Naive thymus-derived CD4-positive, alpha-beta T cell (primary cell): ENCODE measurements at regions of chr7 and their contacts with region 1.

Region 1: GRCh38 chr7:130242198-130243014 is 24.3 kb upstream of the CPA2 start:
- DNase-seq: peak; percentile 35 to 67 (median 47)
- ATAC-seq: peak; percentile 77
- H3K4me3 ChIP-seq: no peak overlapping the region
- H3K4me3 Mint-ChIP-seq: peak overlapping the region in 1 of 10 donors; percentile 66
- H3K27ac ChIP-seq: no peak overlapping the region
- H3K27ac Mint-ChIP-seq: peak overlapping the region in 1 of 9 donors; percentile 68
- H3K4me1 ChIP-seq: no peaks in the 10 kb centered on the region
- H3K4me1 Mint-ChIP-seq: peaks cover 0 to 12% (median 8%) of the 10 kb centered on the region in 7 donors
- H3K27me3 ChIP-seq: no peaks in the 10 kb centered on the region
- H3K27me3 Mint-ChIP-seq: peaks cover 0 to 11% (median 0%) of the 10 kb centered on the region in 5 donors

Region 2: GRCh38 chr7:129975309-129975708 is 267.1 kb before region 1 on chr7:
- CTCF ChIA-PET with region 1: no interaction called
- POLR2A ChIA-PET with region 1: no interaction called
- intact Hi-C with region 1: no loop called
- DNase-seq: no peak
- ATAC-seq: no peak
- H3K4me3 ChIP-seq: no peak overlapping the region
- H3K4me3 Mint-ChIP-seq: no peak overlapping the region
- H3K27ac ChIP-seq: no peak overlapping the region
- H3K27ac Mint-ChIP-seq: no peak overlapping the region
- H3K4me1 ChIP-seq: no peaks in the 10 kb centered on the region
- H3K4me1 Mint-ChIP-seq: no peaks in the 10 kb centered on the region
- H3K27me3 ChIP-seq: no peaks in the 10 kb centered on the region
- H3K27me3 Mint-ChIP-seq: no peaks in the 10 kb centered on the region

Region 3: DNA sequence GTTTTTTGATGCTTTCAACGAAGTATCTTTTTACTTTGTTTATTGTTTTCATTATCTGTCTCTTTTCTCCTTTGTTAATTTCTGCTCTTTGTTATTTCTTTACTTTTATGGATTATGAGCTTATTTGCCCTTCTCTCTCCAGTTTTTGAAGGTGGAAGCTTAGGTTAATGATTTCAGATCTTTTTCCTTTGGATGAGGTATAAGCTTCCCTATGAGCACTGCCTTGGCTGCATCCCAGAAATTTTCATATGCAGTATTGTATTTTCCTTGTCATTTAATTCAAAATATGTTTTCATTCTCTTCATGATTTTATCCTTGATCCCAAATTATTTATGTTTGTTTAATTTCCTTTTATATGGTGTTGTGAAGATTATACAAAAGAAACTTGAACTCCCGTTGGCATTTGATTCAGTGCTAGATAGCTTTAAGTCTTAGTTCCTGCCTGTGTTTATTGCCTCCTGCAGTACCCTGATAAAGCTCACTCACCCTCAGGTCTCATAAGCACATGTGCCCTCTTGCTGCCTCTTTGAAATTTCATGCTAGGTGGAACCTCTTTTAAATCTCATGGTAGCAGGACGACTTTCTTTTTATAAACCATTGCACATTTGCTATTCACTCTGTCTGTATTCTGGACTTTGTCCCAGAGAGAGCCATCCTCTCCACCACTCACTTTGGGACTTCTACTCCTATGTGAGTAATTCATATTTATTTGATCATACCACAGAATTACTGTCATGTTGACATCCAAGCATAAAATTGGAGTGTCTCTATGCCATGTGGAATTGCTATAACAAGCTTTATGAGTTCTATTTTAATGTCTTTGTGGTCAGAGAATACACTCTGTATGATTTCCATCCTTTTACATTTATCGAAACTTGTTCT is 221.4 kb after region 1 on chr7:
- CTCF ChIA-PET with region 1: interaction called, 3 read pairs
- POLR2A ChIA-PET with region 1: no interaction called
- intact Hi-C with region 1: loop called in 1 of 2 experiments (anchors 1 kb)
- DNase-seq: peak in 4 of 9 donors; percentile 9 to 38 (median 22)
- ATAC-seq: no peak
- H3K4me3 ChIP-seq: no peak overlapping the region
- H3K4me3 Mint-ChIP-seq: no peak overlapping the region
- H3K27ac ChIP-seq: no peak overlapping the region
- H3K27ac Mint-ChIP-seq: no peak overlapping the region
- H3K4me1 ChIP-seq: no peaks in the 10 kb centered on the region
- H3K4me1 Mint-ChIP-seq: peaks cover 0 to 13% (median 11%) of the 10 kb centered on the region in 7 donors
- H3K27me3 ChIP-seq: no peaks in the 10 kb centered on the region
- H3K27me3 Mint-ChIP-seq: peaks cover 0 to 4% (median 0%) of the 10 kb centered on the region in 5 donors

Region 4: GRCh38 chr7:130486114-130486958 is 243.9 kb after region 1 on chr7:
- CTCF ChIA-PET with region 1: interaction called, 3 read pairs
- POLR2A ChIA-PET with region 1: no interaction called
- intact Hi-C with region 1: loop called (anchors 1 to 5 kb)
- DNase-seq: peak; percentile 34 to 73 (median 56)
- ATAC-seq: peak; percentile 88
- H3K4me3 ChIP-seq: peak overlapping the region; percentile 80
- H3K4me3 Mint-ChIP-seq: peak overlapping the region; percentile 85 to 94 (median 91)
- H3K27ac ChIP-seq: peak overlapping the region; percentile 41
- H3K27ac Mint-ChIP-seq: peak overlapping the region in 5 of 9 donors; percentile 58 to 88 (median 73)
- H3K4me1 ChIP-seq: peaks cover 7 to 9% of the 10 kb centered on the region in 2 donors
- H3K4me1 Mint-ChIP-seq: peaks cover 22 to 32% (median 25%) of the 10 kb centered on the region in 7 donors
- H3K27me3 ChIP-seq: no peaks in the 10 kb centered on the region
- H3K27me3 Mint-ChIP-seq: peaks cover 5 to 66% (median 31%) of the 10 kb centered on the region in 5 donors

Region 5: GRCh38 chr7:130560970-130561369 is 318.6 kb after region 1 on chr7:
- CTCF ChIA-PET with region 1: no interaction called
- POLR2A ChIA-PET with region 1: no interaction called
- intact Hi-C with region 1: loop called in 1 of 2 experiments (anchors 1 kb)
- DNase-seq: peak in 5 of 9 donors; percentile 3 to 29 (median 13)
- ATAC-seq: peak; percentile 57
- H3K4me3 ChIP-seq: no peak overlapping the region
- H3K4me3 Mint-ChIP-seq: no peak overlapping the region
- H3K27ac ChIP-seq: no peak overlapping the region
- H3K27ac Mint-ChIP-seq: peak overlapping the region in 1 of 9 donors; percentile 52
- H3K4me1 ChIP-seq: no peaks in the 10 kb centered on the region
- H3K4me1 Mint-ChIP-seq: peaks cover 0 to 7% (median 0%) of the 10 kb centered on the region in 7 donors
- H3K27me3 ChIP-seq: no peaks in the 10 kb centered on the region
- H3K27me3 Mint-ChIP-seq: no peaks in the 10 kb centered on the region

Region 6: DNA sequence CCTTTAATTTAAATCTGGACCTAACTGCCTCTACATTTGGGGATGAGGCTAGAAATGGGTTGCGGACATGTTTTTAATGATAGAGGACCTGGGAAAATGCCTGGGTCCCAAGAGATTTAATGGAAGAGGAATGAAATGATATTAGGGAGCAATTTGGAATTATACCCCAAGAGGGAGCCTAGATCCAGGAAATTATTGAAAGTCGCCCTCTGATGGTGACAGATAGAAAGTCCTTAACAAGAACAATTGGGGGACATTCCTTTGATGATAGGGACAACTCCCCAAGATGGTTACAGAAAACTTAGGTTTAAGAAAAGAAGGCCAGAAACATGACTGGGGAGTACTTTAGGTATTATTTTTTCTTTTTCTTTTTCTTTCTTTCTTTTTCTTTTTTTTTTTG is 453.4 kb after region 1 on chr7:
- CTCF ChIA-PET with region 1: no interaction called
- POLR2A ChIA-PET with region 1: no interaction called
- intact Hi-C with region 1: loop called (anchors 1 to 5 kb)
- DNase-seq: peak in 1 of 9 donors; percentile 13
- ATAC-seq: no peak
- H3K4me3 ChIP-seq: no peak overlapping the region
- H3K4me3 Mint-ChIP-seq: no peak overlapping the region
- H3K27ac ChIP-seq: no peak overlapping the region
- H3K27ac Mint-ChIP-seq: no peak overlapping the region
- H3K4me1 ChIP-seq: no peaks in the 10 kb centered on the region
- H3K4me1 Mint-ChIP-seq: no peaks in the 10 kb centered on the region
- H3K27me3 ChIP-seq: no peaks in the 10 kb centered on the region
- H3K27me3 Mint-ChIP-seq: peaks cover 0 to 10% (median 4%) of the 10 kb centered on the region in 5 donors

Region 7: GRCh38 chr7:130758429-130759056 is 516.1 kb after region 1 on chr7:
- CTCF ChIA-PET with region 1: interaction called, 31 read pairs
- POLR2A ChIA-PET with region 1: no interaction called
- intact Hi-C with region 1: loop called in 1 of 2 experiments (anchors 1 kb)
- DNase-seq: peak in 6 of 9 donors; percentile 27 to 53 (median 43)
- ATAC-seq: peak; percentile 66
- H3K4me3 ChIP-seq: no peak overlapping the region
- H3K4me3 Mint-ChIP-seq: no peak overlapping the region
- H3K27ac ChIP-seq: no peak overlapping the region
- H3K27ac Mint-ChIP-seq: no peak overlapping the region
- H3K4me1 ChIP-seq: no peaks in the 10 kb centered on the region
- H3K4me1 Mint-ChIP-seq: peaks cover 0 to 2% (median 0%) of the 10 kb centered on the region in 7 donors
- H3K27me3 ChIP-seq: no peaks in the 10 kb centered on the region
- H3K27me3 Mint-ChIP-seq: peaks cover 0 to 13% (median 4%) of the 10 kb centered on the region in 5 donors

Region 8: DNA sequence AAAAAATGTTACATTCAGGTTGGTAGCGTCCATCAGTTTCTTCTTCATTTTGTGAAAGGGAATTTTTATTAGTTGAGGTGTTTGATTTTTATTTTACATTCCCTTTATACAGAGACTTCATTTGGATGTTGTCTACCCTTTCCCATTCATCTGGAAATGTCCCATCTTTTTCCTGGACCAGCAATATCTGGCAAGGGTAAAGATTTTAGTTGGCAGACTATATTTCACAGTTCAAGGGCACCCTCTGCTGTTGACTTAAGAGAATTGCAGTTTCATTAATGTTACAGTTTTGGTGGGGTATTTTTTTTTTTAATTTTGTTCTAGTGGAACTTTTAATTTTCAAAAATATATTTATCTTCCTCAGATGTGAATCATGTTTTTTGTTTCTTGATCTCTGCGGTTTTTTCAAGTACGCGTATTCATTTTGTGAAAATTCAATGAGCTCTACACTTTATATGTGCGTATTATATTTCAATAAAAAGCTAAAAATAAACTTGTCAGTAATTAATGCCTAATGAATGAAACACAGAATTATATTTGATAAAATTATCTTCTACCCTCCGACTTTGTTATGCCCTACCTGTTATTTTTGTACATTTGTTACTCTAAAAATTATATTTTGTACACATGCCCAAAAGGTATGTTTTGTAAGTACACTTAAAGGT is 589.5 kb after region 1 on chr7:
- CTCF ChIA-PET with region 1: interaction called, 5 read pairs
- POLR2A ChIA-PET with region 1: no interaction called
- intact Hi-C with region 1: loop called (anchors 1 kb)
- DNase-seq: peak in 5 of 9 donors; percentile 15 to 34 (median 25)
- ATAC-seq: peak; percentile 46
- H3K4me3 ChIP-seq: no peak overlapping the region
- H3K4me3 Mint-ChIP-seq: no peak overlapping the region
- H3K27ac ChIP-seq: no peak overlapping the region
- H3K27ac Mint-ChIP-seq: peak overlapping the region in 2 of 9 donors; percentile 16 to 42
- H3K4me1 ChIP-seq: no peaks in the 10 kb centered on the region
- H3K4me1 Mint-ChIP-seq: peaks cover 0 to 6% (median 0%) of the 10 kb centered on the region in 7 donors
- H3K27me3 ChIP-seq: no peaks in the 10 kb centered on the region
- H3K27me3 Mint-ChIP-seq: peaks cover 3 to 22% (median 10%) of the 10 kb centered on the region in 5 donors